Activated B cell treated with CpG ODN at 0.5 μM for 24 hours (primary cell): ENCODE measurements at regions of chrX and their contacts with region 1.

Region 1: GRCh38 chrX:45515262-45516215 is 314.9 kb upstream of the DIPK2B start:
- DNase-seq: no peak
- ATAC-seq: no peak
- H3K4me3 Mint-ChIP-seq: no peak overlapping the region
- H3K27ac Mint-ChIP-seq: no peak overlapping the region
- H3K4me1 Mint-ChIP-seq: peaks cover 2% of the 10 kb centered on the region
- H3K27me3 Mint-ChIP-seq: no peaks in the 10 kb centered on the region
- CTCF ChIP-seq: no peak

Region 2: GRCh38 chrX:45449982-45450381 is 65.6 kb before region 1 on chrX:
- CTCF ChIA-PET with region 1: no interaction called
- POLR2A ChIA-PET with region 1: no interaction called
- intact Hi-C with region 1: no loop called
- DNase-seq: no peak
- ATAC-seq: no peak
- H3K4me3 Mint-ChIP-seq: no peak overlapping the region
- H3K27ac Mint-ChIP-seq: no peak overlapping the region
- H3K4me1 Mint-ChIP-seq: peaks cover 2% of the 10 kb centered on the region
- H3K27me3 Mint-ChIP-seq: peaks cover 10% of the 10 kb centered on the region
- CTCF ChIP-seq: no peak

Region 3: DNA sequence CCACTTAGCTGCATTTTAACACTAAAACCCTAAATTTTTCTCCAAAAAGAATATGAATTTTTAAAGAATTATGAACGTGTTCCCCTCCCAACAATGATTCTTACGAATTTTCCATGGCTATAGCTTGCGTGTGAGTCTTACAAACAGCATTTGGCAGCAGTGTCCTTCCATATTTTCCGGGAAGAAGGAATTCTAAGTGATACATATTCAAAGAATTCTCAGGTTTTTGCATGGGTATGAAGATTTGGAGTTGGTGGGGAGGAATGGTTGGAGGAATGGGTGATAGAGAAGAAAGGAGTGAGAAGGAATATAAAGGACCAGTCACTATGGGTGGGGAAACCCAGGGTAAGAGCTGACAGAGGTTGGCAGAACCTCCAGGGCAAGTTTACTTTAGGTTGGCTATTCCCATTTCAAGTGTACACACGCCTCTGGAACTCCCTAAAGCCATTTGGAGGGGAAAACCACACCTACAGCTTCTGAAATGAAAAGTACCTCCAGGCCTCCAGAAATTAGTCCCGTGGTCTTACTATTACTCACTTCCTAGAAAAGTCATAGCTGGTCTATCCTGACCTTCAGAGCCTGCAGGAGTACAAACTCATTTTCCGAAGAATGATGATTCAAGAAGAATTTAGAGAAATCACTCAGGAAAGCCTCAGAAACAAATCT is 106.0 kb after region 1 on chrX:
- CTCF ChIA-PET with region 1: no interaction called
- POLR2A ChIA-PET with region 1: no interaction called
- intact Hi-C with region 1: no loop called
- DNase-seq: no peak
- ATAC-seq: no peak
- H3K4me3 Mint-ChIP-seq: no peak overlapping the region
- H3K27ac Mint-ChIP-seq: no peak overlapping the region
- H3K4me1 Mint-ChIP-seq: no peaks in the 10 kb centered on the region
- H3K27me3 Mint-ChIP-seq: no peaks in the 10 kb centered on the region
- CTCF ChIP-seq: no peak

Region 4: DNA sequence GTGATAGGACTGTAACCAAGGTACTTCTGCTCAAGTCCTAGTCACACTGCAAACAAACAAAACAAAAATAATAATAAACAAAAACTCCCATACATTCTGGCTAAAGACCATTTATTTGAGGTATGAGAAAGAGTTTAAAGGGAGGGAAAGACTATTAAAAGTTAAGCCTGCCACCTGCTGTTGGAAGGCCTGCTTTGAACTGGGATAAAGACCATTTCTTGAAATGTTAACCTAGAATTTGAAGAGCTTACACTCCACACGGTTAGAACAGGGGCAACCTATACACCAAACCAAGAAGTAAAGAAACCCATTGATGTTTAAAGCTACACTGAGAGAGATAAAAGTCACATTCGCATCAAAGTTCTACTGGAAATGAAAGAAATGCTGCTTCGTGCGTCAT is 233.8 kb after region 1 on chrX:
- CTCF ChIA-PET with region 1: interaction called, 5 read pairs
- POLR2A ChIA-PET with region 1: interaction called, 3 read pairs
- intact Hi-C with region 1: loop called (anchors 1 kb)
- DNase-seq: no peak
- ATAC-seq: no peak
- H3K4me3 Mint-ChIP-seq: no peak overlapping the region
- H3K27ac Mint-ChIP-seq: no peak overlapping the region
- H3K4me1 Mint-ChIP-seq: peaks cover 28% of the 10 kb centered on the region
- H3K27me3 Mint-ChIP-seq: no peaks in the 10 kb centered on the region
- CTCF ChIP-seq: no peak

Region 5: GRCh38 chrX:45771560-45772340 is 256.2 kb after region 1 on chrX:
- CTCF ChIA-PET with region 1: no interaction called
- POLR2A ChIA-PET with region 1: no interaction called
- intact Hi-C with region 1: no loop called
- DNase-seq: no peak
- ATAC-seq: peak; percentile 46
- H3K4me3 Mint-ChIP-seq: peak overlapping the region; percentile 76
- H3K27ac Mint-ChIP-seq: peak overlapping the region; percentile 85
- H3K4me1 Mint-ChIP-seq: peaks cover 38% of the 10 kb centered on the region
- H3K27me3 Mint-ChIP-seq: no peaks in the 10 kb centered on the region
- CTCF ChIP-seq: no peak

Region 6: GRCh38 chrX:45781901-45782553 is 266.5 kb after region 1 on chrX:
- CTCF ChIA-PET with region 1: no interaction called
- POLR2A ChIA-PET with region 1: no interaction called
- intact Hi-C with region 1: loop called (anchors 1 kb)
- DNase-seq: no peak
- ATAC-seq: no peak
- H3K4me3 Mint-ChIP-seq: no peak overlapping the region
- H3K27ac Mint-ChIP-seq: no peak overlapping the region
- H3K4me1 Mint-ChIP-seq: peaks cover 7% of the 10 kb centered on the region
- H3K27me3 Mint-ChIP-seq: no peaks in the 10 kb centered on the region
- CTCF ChIP-seq: no peak

Region 7: GRCh38 chrX:45843518-45843917 is 328.0 kb after region 1 on chrX:
- CTCF ChIA-PET with region 1: interaction called, 15 read pairs
- POLR2A ChIA-PET with region 1: no interaction called
- intact Hi-C with region 1: loop called (anchors 1 kb)
- DNase-seq: no peak
- ATAC-seq: no peak
- H3K4me3 Mint-ChIP-seq: no peak overlapping the region
- H3K27ac Mint-ChIP-seq: no peak overlapping the region
- H3K4me1 Mint-ChIP-seq: no peaks in the 10 kb centered on the region
- H3K27me3 Mint-ChIP-seq: no peaks in the 10 kb centered on the region
- CTCF ChIP-seq: no peak

Region 8: DNA sequence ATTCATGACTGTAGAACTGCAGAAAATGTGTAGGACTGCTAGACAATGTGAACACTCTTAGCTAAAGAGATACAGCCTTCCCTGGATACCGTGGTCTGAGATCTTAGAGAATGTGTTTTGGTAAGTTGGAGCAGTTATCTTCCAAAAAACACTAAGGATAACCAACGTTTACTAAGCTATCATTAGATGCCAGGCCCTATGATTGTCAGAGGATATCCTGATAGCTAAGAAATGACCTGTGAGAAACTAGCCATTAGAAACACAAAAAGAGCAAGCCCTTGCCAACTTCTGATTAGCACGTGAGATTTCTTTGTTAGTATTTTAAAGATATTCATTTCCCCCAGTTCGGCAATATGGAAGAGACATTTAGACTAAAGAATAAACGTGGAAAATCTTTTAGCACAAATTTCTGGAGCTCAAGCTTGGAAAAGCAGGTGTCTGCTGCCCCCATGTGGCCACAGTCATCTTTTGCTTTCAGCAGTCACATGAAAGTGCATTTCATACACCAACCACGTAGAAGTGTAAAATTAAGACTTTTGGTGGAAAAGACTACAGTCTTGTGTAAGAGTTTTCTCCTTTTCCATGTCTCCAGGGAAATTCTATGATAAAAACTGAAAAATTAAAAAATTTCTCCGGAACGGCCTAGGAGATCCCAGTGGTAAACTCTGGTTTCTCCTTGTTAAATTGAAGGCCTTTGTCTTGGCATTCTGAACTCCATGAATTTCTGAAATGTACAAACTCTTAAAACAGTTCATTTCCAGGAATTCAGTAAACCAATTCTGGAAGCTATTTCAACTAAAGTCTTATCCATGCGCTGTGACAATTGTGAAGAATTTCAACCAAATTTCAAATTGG is 893.2 kb after region 1 on chrX:
- CTCF ChIA-PET with region 1: interaction called, 15 read pairs
- POLR2A ChIA-PET with region 1: no interaction called
- intact Hi-C with region 1: loop called (anchors 1 kb)
- DNase-seq: peak; percentile 32
- ATAC-seq: no peak
- H3K4me3 Mint-ChIP-seq: no peak overlapping the region
- H3K27ac Mint-ChIP-seq: no peak overlapping the region
- H3K4me1 Mint-ChIP-seq: no peaks in the 10 kb centered on the region
- H3K27me3 Mint-ChIP-seq: no peaks in the 10 kb centered on the region
- CTCF ChIP-seq: no peak